ENCODE measurements at regions of chr14 and their contacts with region 1.

Region 1: GRCh38 chr14:53306267-53306721 is 153.2 kb upstream of the DDHD1 start:
- DNase-seq: peak; percentile 60
- H3K4me3 Mint-ChIP-seq: peak overlapping the region; percentile 55
- H3K27ac Mint-ChIP-seq: no peak overlapping the region
- H3K4me1 Mint-ChIP-seq: peaks cover 6% of the 10 kb centered on the region
- H3K27me3 Mint-ChIP-seq: peaks cover 4% of the 10 kb centered on the region

Region 2: DNA sequence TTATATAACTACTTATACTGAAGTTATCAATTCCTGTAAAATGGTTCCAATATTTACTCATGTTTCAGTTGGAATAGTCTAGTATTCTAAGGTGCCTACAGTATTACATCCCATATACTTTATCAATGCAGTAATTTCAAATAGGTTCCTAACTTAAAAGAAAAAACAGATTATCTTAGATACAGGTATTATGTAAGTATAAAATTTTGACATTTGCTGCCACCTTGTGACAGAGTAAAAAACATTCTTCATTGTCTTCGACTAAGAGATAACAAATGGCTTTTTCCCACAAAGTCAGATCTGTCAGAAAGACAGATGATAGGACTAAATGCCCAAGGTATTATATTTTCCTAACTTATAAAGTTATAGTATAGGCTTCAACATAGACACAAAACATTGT is 832.7 kb before region 1 on chr14:
- CTCF ChIA-PET with region 1: no interaction called
- intact Hi-C with region 1: loop called (anchors 5 kb)
- DNase-seq: no peak
- H3K4me3 Mint-ChIP-seq: no peak overlapping the region
- H3K27ac Mint-ChIP-seq: no peak overlapping the region
- H3K4me1 Mint-ChIP-seq: peaks cover 4% of the 10 kb centered on the region
- H3K27me3 Mint-ChIP-seq: no peaks in the 10 kb centered on the region

Region 3: DNA sequence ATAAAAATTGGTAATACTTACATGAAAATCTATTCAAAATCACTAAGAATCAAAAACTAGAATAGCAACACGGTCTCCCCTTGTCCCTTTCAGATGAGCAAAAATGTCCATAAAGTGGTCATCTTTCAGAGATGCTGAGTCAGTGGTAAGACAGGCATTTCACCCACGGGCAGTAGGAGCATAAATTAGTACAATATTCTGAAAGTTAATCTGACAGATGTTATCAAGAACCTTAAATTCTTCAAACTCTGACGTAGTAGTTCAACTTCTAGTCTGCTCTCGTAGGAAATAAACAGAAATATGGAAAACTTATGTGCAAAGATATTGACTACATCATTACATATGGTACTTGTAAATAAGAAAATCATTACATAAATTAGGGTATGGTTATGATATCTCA is 481.8 kb before region 1 on chr14:
- CTCF ChIA-PET with region 1: interaction called, 23 read pairs
- intact Hi-C with region 1: loop called (anchors 1 kb)
- DNase-seq: no peak
- H3K4me3 Mint-ChIP-seq: no peak overlapping the region
- H3K27ac Mint-ChIP-seq: no peak overlapping the region
- H3K4me1 Mint-ChIP-seq: peaks cover 2% of the 10 kb centered on the region
- H3K27me3 Mint-ChIP-seq: peaks cover 1% of the 10 kb centered on the region

Region 4: DNA sequence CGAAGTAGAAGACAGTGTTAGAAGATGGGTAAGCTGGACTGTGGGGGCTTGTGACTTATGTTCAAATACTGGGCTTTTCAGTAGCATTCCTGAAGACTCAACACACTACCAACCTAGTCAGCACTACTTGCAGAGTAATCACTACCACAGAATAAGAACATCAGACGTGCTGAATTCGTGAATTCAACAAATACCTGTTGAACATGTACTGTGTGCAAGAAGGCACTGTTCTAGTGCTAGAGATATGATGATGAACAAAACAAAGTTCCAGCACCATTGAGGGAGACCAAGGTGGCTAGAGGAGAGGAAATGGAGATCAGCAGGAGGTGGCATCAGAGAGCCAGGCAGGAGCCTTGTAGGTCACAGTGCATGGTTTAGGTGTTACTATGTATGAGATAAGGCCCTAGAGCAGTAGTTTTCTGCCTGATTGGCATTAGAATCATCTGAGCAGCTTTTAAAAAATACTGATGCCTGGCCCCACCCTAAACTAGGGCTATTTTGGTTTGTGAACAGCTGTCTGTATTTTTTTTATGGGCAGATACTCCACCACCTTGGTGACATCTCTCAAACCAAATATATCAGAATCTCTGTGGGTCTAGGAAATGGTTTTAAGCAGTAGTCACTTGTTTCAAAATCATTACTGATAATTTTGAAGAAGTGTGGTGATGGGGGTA is 382.3 kb before region 1 on chr14:
- CTCF ChIA-PET with region 1: no interaction called
- intact Hi-C with region 1: loop called (anchors 2 kb)
- DNase-seq: peak; percentile 31
- H3K4me3 Mint-ChIP-seq: no peak overlapping the region
- H3K27ac Mint-ChIP-seq: no peak overlapping the region
- H3K4me1 Mint-ChIP-seq: peaks cover 4% of the 10 kb centered on the region
- H3K27me3 Mint-ChIP-seq: no peaks in the 10 kb centered on the region

Region 5: GRCh38 chr14:52961060-52961639 is 345.1 kb before region 1 on chr14:
- CTCF ChIA-PET with region 1: interaction called, 7 read pairs
- intact Hi-C with region 1: loop called (anchors 2 kb)
- DNase-seq: peak; percentile 73
- H3K4me3 Mint-ChIP-seq: no peak overlapping the region
- H3K27ac Mint-ChIP-seq: no peak overlapping the region
- H3K4me1 Mint-ChIP-seq: peaks cover 6% of the 10 kb centered on the region
- H3K27me3 Mint-ChIP-seq: peaks cover 2% of the 10 kb centered on the region

Region 6: DNA sequence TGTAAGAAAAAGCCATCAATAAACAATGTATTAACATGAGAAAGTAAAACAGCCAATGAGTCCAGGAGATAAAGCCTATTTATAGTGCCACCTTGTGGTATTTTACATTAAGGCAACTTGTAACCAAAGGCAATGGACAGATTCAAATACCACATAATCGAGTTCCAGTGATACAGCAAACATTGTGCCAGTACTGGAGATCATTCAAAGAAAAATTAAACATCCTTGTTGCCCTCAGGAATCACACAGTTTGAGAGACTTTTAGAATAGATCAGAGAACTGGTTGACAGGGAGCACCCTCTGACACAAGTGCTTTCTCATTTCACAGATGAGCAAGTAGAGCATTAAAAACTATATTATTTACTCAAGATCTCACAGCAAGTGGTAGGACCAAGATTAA is 251.3 kb before region 1 on chr14:
- CTCF ChIA-PET with region 1: interaction called, 5 read pairs
- intact Hi-C with region 1: loop called (anchors 1 kb)
- DNase-seq: no peak
- H3K4me3 Mint-ChIP-seq: no peak overlapping the region
- H3K27ac Mint-ChIP-seq: no peak overlapping the region
- H3K4me1 Mint-ChIP-seq: peaks cover 3% of the 10 kb centered on the region
- H3K27me3 Mint-ChIP-seq: no peaks in the 10 kb centered on the region

Region 7: GRCh38 chr14:53295985-53296582 is 10.2 kb before region 1 on chr14:
- CTCF ChIA-PET with region 1: interaction called, 41 read pairs
- intact Hi-C with region 1: no loop called
- DNase-seq: peak; percentile 22
- H3K4me3 Mint-ChIP-seq: no peak overlapping the region
- H3K27ac Mint-ChIP-seq: no peak overlapping the region
- H3K4me1 Mint-ChIP-seq: no peaks in the 10 kb centered on the region
- H3K27me3 Mint-ChIP-seq: no peaks in the 10 kb centered on the region